ENCODE measurements at regions of chr15 and their contacts with region 1.

Region 1: DNA sequence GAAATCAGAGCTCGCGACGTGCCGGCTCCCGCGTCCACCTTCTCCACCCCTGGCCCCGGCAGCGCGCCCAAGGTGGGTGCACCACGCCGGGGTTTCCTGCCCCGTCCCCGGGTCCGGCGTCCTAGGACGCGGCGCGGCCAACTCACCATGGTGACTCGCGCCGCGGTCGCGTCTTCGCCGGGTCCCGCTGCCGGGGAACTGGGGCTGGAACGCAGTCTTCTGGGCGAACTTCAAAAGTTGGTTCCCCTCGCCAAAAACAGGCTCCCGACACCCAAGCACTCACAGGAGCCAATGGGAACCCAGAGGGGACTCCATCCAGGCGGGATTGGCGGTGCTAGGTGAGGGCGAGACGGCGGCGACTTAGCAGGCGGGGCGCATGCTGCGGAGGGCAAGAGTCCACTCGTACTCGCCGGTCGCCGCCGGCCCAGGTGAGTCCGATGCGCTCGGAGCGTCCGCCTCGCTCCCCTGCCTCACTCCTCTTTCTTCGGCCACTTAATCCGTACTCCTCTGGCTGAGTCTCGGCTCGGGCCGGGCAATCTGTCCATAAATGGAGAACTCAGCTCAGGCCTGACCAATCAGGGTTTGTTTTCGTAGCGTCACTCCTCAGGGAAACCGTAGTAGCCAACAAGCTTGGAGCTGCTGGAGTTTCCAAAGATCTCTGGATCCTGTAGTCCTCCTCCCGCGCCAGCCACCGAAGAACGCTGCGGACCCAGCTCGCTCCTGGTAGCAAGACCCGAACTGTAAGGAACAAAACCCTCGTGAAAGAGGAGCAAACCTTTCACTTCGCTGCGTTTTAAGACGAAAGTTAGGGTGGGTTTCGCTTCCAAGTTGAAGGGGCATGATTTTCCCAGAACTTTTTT is at the start of gene MYO1E:
- DNase-seq: peak; percentile 91 to 95
- ATAC-seq: peak; percentile 98
- H3K4me3 ChIP-seq: peak within 1 kb of the TSS; percentile 76 to 94 (median 88)
- H3K27ac ChIP-seq: peak within 1 kb of the TSS; percentile 93 to 97 (median 97)
- H3K4me1 ChIP-seq: peaks cover 6 to 15% of the 10 kb centered on the region in 2 donors
- H3K27me3 ChIP-seq: no peaks in the 10 kb centered on the region
- CTCF ChIP-seq: no peak
- POLR2A ChIP-seq: peak; percentile 88 to 98
- total RNA-seq, gene MYO1E: 12.8 to 39.6 (median 30.7) TPM

Region 2: DNA sequence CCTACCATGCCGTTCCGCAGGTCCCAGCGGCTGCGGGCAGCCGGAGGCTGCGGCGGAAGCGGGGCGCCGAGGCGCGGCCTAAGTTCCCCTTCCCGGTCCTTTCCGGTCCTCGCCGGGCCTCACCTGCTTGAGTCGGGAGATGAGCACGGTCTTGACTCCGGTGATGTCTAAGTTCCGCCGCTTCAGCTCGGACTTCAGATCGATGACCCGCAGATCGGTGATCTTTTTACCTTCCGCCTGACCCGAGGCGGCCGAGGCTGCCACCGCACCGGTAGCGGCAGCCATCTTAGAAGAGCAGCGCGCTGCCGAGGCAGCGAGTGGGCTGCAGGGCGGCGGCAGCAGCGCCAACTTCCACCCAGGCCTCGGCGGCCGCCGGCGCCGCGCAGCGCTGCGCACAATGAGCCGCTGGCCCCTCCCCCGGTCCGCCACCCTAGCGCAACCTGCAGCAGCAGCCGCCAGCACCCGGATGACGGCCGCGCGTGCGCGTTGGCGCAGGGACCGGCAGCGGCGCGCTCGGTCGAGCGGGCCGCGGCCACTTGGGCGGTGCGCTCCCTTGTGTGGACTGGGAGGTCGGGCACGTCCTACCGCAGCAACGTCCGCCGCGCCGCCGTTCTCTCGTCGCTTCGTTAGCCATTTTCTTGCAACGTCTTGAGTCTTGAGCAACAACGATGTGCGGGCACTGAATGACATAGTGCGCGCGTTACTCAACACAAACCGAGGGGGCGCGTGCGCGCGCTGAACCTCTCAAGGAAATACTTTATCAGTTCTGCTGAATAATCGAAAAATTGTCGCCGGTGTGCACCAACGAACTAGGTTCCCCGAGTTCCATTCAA is 439.1 kb before region 1 on chr15 and contains the start of gene SLTM:
- in situ Hi-C with region 1: no loop called
- intact Hi-C with region 1: loop called (anchors 2 kb)
- DNase-seq: peak; percentile 85 to 94
- ATAC-seq: peak; percentile 87
- H3K4me3 ChIP-seq: peak within 1 kb of the TSS; percentile 73 to 95 (median 76)
- H3K27ac ChIP-seq: peak within 1 kb of the TSS; percentile 93 to 99 (median 96)
- H3K4me1 ChIP-seq: peaks cover 13 to 26% of the 10 kb centered on the region in 2 donors
- H3K27me3 ChIP-seq: no peaks in the 10 kb centered on the region
- CTCF ChIP-seq: peak in 4 of 5 experiments; percentile 13 to 43 (median 37)
- POLR2A ChIP-seq: peak; percentile 94 to 97
- total RNA-seq, gene SLTM: 46.5 to 76.2 (median 60.9) TPM

Region 3: DNA sequence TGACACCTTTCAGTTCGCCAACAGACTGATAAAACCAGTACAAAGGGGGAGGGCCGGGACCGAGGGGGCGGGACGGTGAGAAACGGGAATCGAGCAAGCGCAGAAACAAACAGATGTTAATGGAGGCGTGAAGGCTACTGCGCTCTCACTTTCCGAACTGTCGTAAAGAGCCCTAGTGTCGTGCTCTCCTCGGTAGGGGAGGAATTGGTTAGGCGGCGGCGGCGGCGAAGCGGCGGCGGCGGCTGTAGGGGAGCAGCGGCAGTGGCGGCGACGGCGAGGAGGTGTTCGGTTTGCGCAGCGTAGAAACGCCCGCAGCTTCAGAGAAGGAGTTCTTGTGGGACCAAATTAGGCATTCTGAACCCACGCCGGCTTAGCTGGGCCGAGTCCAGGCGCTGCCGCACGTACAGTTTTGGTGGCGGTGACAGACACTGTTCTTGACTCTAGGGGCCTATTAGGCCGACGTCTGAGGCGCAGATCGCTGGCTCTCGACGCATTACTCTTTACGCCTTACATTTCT is 385.0 kb before region 1 on chr15 and contains the start of gene RNF111:
- in situ Hi-C with region 1: no loop called
- intact Hi-C with region 1: loop called (anchors 10 kb)
- DNase-seq: peak; percentile 87 to 90
- ATAC-seq: peak; percentile 99
- H3K4me3 ChIP-seq: peak within 1 kb of the TSS; percentile 88 to 97 (median 92)
- H3K27ac ChIP-seq: peak within 1 kb of the TSS; percentile 91 to 98 (median 94)
- H3K4me1 ChIP-seq: peaks cover 16 to 35% of the 10 kb centered on the region in 2 donors
- H3K27me3 ChIP-seq: no peaks in the 10 kb centered on the region
- CTCF ChIP-seq: no peak
- POLR2A ChIP-seq: peak; percentile 82 to 85
- total RNA-seq, gene RNF111: 14.5 to 18.4 (median 15.8) TPM

Region 4: GRCh38 chr15:59247364-59247763 is 125.2 kb before region 1 on chr15:
- in situ Hi-C with region 1: no loop called
- intact Hi-C with region 1: loop called (anchors 5 kb)
- DNase-seq: peak in 1 of 2 donors; percentile 16
- ATAC-seq: peak in 1 of 2 donors; percentile 33
- H3K4me3 ChIP-seq: no peak overlapping the region
- H3K27ac ChIP-seq: no peak overlapping the region
- H3K4me1 ChIP-seq: no peaks in the 10 kb centered on the region
- H3K27me3 ChIP-seq: no peaks in the 10 kb centered on the region
- CTCF ChIP-seq: peak in 4 of 5 experiments; percentile 17 to 52 (median 47)
- POLR2A ChIP-seq: no peak

Region 5: DNA sequence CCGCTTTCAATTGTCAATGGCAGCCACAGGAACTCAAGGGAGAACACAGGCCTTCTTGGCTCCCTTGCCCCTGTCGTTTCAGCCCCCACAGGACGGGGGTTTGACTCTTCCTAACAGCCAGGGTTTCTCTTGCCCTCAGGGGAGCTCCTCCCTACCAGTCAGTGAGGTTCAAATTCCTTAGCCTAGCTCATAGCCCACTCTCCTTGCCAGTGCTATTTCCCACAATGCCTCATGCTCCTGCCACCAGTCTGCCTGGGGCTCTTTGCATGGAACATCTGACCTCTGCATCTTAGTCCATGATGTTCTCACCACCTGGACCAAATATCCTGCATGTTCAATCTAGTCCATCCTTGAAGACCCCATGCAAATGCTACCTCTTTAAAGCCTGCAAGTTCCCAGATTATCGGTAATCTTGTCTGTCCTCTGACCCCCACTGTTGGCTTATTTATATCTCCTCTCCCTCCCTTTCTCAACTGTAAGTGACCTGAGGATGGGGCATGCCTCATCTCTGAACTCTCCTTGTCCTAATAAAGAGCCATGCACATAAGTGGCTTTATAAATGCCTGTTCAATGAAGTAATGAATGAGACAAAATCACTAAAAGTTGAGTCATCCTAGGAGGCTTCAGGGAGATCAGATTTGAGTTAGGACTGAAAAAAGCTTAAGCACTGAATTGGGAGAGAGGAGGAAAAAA is 77.9 kb before region 1 on chr15:
- in situ Hi-C with region 1: no loop called
- intact Hi-C with region 1: loop called (anchors 2 kb)
- DNase-seq: no peak
- ATAC-seq: no peak
- H3K4me3 ChIP-seq: peak overlapping the region; percentile 2 to 28 (median 17)
- H3K27ac ChIP-seq: peak overlapping the region; percentile 69 to 78 (median 76)
- H3K4me1 ChIP-seq: peaks cover 48 to 51% of the 10 kb centered on the region in 2 donors
- H3K27me3 ChIP-seq: no peaks in the 10 kb centered on the region
- CTCF ChIP-seq: no peak
- POLR2A ChIP-seq: no peak

Region 6: GRCh38 chr15:59420986-59421618 is 48.5 kb after region 1 on chr15:
- in situ Hi-C with region 1: no loop called
- intact Hi-C with region 1: no loop called
- DNase-seq: no peak
- ATAC-seq: no peak
- H3K4me3 ChIP-seq: no peak overlapping the region
- H3K27ac ChIP-seq: no peak overlapping the region
- H3K4me1 ChIP-seq: no peaks in the 10 kb centered on the region
- H3K27me3 ChIP-seq: peaks cover 0 to 4% (median 3%) of the 10 kb centered on the region in 3 donors
- CTCF ChIP-seq: no peak
- POLR2A ChIP-seq: no peak

Region 7: DNA sequence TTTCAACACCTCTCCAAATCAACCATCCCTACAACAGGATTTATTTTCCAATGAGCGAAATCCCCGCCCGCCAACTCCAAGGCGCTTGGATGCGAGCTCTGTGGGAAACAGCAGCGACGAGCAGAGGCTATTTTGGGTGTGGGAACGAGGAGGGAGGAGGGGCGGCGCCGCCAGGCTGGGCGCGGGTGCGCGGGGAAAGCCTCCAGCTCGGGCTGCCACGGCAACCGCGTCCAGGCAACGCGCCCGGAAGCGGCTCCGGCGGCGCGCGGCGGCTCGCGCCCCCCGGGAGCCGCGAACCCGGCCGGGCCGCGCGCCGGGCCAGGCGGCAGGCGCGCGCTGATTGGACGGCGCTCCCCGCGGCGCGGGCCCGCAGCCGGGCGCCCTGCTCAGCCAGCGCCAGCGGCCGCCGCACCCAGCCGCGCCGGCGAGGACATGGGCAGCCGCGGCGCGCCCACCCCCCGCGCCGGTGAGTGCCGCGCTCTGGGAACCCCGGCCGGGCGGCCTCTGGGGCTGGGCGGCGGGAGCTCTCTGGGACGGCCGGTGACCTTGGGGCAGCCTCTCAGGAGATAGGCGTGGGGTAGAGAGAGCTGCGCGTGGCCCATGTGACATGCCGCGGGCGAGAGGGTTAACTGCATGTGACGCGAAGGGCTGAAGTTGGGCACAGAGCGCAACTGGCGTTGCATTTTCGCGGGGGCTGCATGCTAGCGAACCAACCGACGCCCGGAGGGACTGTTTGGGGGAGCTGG is 65.4 kb after region 1 on chr15 and contains the start of gene FAM81A:
- in situ Hi-C with region 1: no loop called
- intact Hi-C with region 1: loop called (anchors 2 kb)
- DNase-seq: peak; percentile 54 to 74
- ATAC-seq: peak; percentile 95 to 96
- H3K4me3 ChIP-seq: peak within 1 kb of the TSS; percentile 50 to 71 (median 56)
- H3K27ac ChIP-seq: peak within 1 kb of the TSS in 1 of 4 donors; percentile 17
- H3K4me1 ChIP-seq: peaks cover 6 to 11% of the 10 kb centered on the region in 2 donors
- H3K27me3 ChIP-seq: no peaks in the 10 kb centered on the region
- CTCF ChIP-seq: no peak
- POLR2A ChIP-seq: no peak
- total RNA-seq, gene FAM81A: 0.07 to 0.10 TPM in 2 of 4 donors, not detected in the others